Sigmoid colon (tissue), 7 donors: ENCODE measurements at regions of chr19 and their contacts with region 1.

Region 1: DNA sequence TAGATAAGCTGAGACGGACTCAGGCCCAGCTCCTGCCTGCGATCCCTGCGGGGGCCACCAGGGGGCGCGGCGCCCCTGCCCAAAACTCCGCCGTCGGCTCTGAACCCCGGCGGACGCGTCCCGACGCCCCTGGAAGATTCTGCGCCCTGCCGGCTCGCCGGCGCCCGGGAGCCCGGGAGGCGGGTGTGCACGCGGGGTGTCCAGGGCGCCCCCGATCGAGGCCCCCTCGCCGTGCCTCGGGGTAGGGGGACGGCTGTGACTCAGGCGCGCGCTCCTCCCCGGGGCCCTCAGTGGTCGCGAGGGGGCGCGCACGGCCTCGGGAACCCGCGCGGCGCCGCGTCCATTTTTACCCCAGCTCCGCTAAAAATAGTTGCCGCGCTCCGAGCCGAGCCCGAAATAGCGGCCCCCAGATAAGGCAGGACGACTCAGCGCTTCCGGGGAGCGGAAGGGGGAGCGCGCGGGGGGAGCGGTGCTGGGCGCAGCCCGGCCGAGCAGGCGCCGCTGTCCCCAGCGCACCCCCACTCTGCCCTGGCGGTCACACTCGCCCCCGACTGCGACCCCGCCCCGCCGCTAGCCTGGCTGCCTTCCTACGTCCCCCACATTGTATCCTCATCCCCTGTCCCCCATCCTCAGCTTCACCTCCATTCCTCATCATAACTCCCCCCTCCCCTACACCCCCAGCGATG is 16.0 kb upstream of the ERCC1 start:
- DNase-seq: peak; percentile 95
- H3K4me3 ChIP-seq: peak overlapping the region; percentile 55 to 71 (median 66)
- H3K27ac ChIP-seq: peak overlapping the region; percentile 93 to 96 (median 94)
- H3K4me1 ChIP-seq: peaks cover 0 to 31% (median 28%) of the 10 kb centered on the region in 4 donors
- H3K27me3 ChIP-seq: no peaks in the 10 kb centered on the region
- CTCF ChIP-seq: peak; percentile 91 to 100 (median 94)
- EP300 ChIP-seq: peak in 2 of 4 donors; percentile 30 to 44
- POLR2A ChIP-seq: no peak

Region 2: DNA sequence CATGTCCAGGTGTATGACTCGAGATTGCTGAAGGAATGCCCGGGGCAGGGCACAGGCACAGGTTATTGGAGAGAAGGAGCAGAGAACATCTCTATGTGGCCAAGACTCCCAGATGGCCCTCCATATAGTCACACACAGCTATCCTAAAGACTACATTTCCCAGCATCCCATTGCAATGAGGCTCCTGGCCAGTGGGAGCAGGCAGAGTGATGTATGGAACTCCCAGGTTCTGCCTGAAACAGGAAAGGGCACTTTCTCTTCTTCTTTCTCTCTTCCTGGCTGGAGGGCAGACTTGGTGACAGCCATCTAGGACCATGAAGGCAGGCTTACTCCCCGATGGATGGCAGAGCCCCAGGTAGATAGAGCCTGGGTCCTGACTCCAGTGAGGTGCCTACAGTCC is 48.4 kb before region 1 on chr19:
- intact Hi-C with region 1: no loop called
- DNase-seq: no peak
- H3K4me3 ChIP-seq: no peak overlapping the region
- H3K27ac ChIP-seq: no peak overlapping the region
- H3K4me1 ChIP-seq: no peaks in the 10 kb centered on the region
- H3K27me3 ChIP-seq: peaks cover 1 to 14% (median 6%) of the 10 kb centered on the region in 3 donors
- CTCF ChIP-seq: no peak
- EP300 ChIP-seq: no peak
- POLR2A ChIP-seq: no peak

Region 3: GRCh38 chr19:45478454-45479238 is 38.9 kb after region 1 on chr19:
- intact Hi-C with region 1: loop called (anchors 1 kb)
- DNase-seq: peak; percentile 91
- H3K4me3 ChIP-seq: peak overlapping the region; percentile 31 to 53 (median 48)
- H3K27ac ChIP-seq: peak overlapping the region; percentile 87 to 96 (median 91)
- H3K4me1 ChIP-seq: peaks cover 0 to 12% (median 8%) of the 10 kb centered on the region in 4 donors
- H3K27me3 ChIP-seq: no peaks in the 10 kb centered on the region
- CTCF ChIP-seq: peak; percentile 94 to 100 (median 97)
- EP300 ChIP-seq: peak in 1 of 4 donors; percentile 30
- POLR2A ChIP-seq: peak in 1 of 2 donors; percentile 16

Region 4: GRCh38 chr19:45584332-45585157 is 144.8 kb after region 1 on chr19 and contains the start of gene OPA3:
- intact Hi-C with region 1: loop called (anchors 10 kb)
- DNase-seq: peak; percentile 100
- H3K4me3 ChIP-seq: peak within 1 kb of the TSS; percentile 49 to 77 (median 62)
- H3K27ac ChIP-seq: peak within 1 kb of the TSS; percentile 91 to 99 (median 96)
- H3K4me1 ChIP-seq: peaks cover 0 to 12% (median 8%) of the 10 kb centered on the region in 4 donors
- H3K27me3 ChIP-seq: no peaks in the 10 kb centered on the region
- CTCF ChIP-seq: no peak
- EP300 ChIP-seq: peak in 3 of 4 donors; percentile 60 to 97 (median 87)
- POLR2A ChIP-seq: peak; percentile 15 to 55
- total RNA-seq, gene OPA3: 5.4 to 9.9 (median 8.1) TPM

Region 5: GRCh38 chr19:45630493-45630919 is 190.8 kb after region 1 on chr19:
- intact Hi-C with region 1: no loop called
- DNase-seq: no peak
- H3K4me3 ChIP-seq: no peak overlapping the region
- H3K27ac ChIP-seq: no peak overlapping the region
- H3K4me1 ChIP-seq: peaks cover 0 to 8% (median 6%) of the 10 kb centered on the region in 4 donors
- H3K27me3 ChIP-seq: no peaks in the 10 kb centered on the region
- CTCF ChIP-seq: no peak
- EP300 ChIP-seq: no peak
- POLR2A ChIP-seq: no peak